ENCODE measurements at regions of chr20 and their contacts with region 1.

Region 1: DNA sequence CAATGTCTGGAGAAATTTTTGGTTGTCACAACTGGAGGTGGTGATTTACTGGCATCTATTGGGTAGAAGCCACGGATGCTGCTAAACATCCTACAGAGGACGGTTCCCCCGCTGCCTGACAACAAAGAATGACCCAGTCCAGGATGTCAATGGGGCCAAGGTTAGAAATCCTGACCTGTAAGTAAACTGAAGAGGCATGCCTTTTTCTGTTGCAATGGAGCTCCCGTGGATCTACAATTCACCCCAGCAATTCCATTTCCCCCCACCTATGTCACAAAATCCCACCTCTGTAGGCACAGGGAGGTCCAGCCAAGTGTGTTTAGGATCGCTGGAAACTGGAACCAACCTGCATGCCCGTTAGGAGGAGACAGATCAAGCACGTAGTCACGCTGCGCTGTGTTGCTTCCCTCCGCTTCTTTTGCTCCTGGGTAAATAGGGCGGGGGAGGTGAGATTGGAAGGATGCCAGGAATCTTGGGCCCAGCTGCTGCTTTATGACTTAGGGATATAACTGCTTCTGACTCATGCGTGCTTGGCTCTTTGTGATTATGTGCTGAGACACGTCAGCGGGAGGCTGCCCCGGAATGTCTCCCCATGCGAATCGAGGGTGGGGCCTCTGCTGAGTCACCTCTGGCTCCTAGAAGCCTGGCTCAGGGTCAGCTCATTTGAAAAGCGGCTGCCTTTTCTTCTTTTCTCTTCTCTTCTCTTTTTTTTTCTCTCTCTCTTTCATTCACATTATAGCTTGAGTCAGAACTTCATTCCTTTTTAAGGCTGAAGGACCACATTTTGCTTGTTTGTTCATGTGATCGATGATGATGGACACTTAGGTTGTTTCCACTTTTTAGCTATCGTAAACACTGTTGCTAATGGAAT is 12.4 kb upstream of the PEDS1 start:
- DNase-seq: peak; percentile 28 to 90 (median 34)
- H3K4me3 ChIP-seq: no peak overlapping the region
- H3K4me3 Mint-ChIP-seq: peak overlapping the region; percentile 35 to 72 (median 64)
- H3K27ac ChIP-seq: no peak overlapping the region
- H3K27ac Mint-ChIP-seq: peak overlapping the region in 5 of 7 donors; percentile 41 to 82 (median 70)
- H3K4me1 ChIP-seq: peaks cover 9% of the 10 kb centered on the region
- H3K4me1 Mint-ChIP-seq: peaks cover 6 to 13% (median 10%) of the 10 kb centered on the region in 4 donors
- H3K27me3 ChIP-seq: no peaks in the 10 kb centered on the region
- H3K27me3 Mint-ChIP-seq: peaks cover 2 to 4% of the 10 kb centered on the region in 2 donors

Region 2: DNA sequence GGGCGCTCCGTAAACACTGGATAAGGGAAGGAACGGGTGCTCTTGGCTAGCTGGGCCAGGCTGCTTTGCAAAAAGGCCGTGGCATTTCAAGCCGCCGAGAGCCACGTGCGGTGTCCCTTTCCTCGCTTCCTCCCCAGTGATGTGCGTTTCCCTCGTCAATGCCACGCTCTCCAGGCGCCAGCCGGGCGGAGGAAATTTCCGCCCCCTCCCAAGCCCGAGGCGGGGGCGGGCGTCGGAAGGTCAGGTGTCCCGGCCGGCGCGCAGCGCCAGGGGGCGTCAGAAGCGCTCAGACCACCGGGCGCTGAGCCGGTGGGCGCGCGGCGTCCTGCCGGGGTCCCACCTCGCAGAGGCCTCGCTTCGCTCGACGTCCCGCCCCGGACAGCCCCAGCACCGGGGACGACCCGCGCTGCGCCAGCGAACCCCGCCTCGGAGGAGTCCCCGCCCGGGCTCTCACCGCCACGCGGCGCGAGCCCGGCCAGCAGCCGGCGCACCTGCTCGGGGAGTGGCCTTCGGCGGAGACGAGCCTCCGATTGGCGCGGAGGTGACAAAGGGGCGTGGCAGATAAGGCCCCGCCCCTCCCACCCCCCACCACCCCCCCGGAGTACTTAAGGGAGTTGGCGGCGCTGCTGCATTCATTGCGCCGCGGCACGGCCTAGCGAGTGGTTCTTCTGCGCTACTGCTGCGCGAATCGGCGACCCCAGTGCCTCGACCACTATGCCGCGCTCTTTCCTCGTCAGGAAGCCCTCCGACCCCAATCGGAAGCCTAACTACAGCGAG is 183.4 kb before region 1 on chr20 and contains the start of gene SNAI1:
- CTCF ChIA-PET with region 1: interaction called, 27 read pairs
- POLR2A ChIA-PET with region 1: interaction called, 5 read pairs
- intact Hi-C with region 1: loop called (anchors 1 kb)
- DNase-seq: peak; percentile 81 to 87 (median 83)
- H3K4me3 ChIP-seq: peak within 1 kb of the TSS in 1 of 2 donors; percentile 23
- H3K4me3 Mint-ChIP-seq: peak within 1 kb of the TSS; percentile 57 to 76 (median 68)
- H3K27ac ChIP-seq: no peak within 1 kb of the TSS
- H3K27ac Mint-ChIP-seq: peak within 1 kb of the TSS; percentile 36 to 84 (median 74)
- H3K4me1 ChIP-seq: peaks cover 20% of the 10 kb centered on the region
- H3K4me1 Mint-ChIP-seq: peaks cover 9 to 33% (median 16%) of the 10 kb centered on the region in 4 donors
- H3K27me3 ChIP-seq: no peaks in the 10 kb centered on the region
- H3K27me3 Mint-ChIP-seq: no peaks in the 10 kb centered on the region
- total RNA-seq, gene SNAI1: 0.19 to 0.44 TPM

Region 3: DNA sequence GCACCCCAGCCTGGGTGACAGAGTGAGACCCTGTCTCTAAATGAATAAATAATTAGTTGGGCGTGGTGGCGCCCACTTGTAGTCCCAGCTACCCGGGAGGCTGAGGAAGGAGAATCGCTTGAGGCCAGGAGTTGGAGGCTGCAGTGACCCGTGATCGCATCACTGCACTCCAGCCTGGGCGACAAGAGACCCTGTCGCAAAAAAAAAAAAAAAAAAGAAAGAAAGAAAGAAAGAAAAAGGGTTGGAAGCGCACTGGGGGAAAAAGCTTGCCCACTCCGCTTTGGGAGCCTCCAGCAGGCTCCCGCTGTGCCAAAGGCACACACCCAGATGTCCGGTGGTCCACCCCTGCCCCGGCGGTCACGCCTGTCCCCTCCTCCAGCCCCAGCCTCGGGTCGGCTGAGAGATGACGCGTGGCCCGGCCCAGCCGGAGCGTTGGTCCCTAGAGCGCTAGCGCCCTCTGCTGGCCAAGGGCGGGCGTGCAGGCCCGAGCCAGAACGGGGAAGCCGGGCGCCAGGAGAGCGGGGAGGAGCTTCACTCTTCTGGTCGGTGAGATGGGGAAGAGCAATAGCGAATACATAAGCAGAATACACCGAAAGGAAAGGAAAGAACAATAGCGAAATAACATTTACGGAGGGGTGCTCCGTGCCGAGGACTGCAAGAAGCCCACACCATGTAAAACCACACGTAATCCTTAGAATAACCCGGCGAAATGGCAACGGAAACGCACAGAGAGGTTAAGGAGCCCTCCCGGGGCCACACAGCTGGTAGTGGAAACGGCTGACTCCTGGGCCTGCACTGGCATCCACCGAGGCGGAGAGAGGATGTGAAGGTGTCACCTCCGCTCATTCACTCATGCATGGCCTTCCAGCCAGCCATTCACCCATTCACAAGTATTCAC is 94.7 kb before region 1 on chr20:
- CTCF ChIA-PET with region 1: interaction called, 11 read pairs
- POLR2A ChIA-PET with region 1: no interaction called
- intact Hi-C with region 1: loop called (anchors 5 kb)
- DNase-seq: peak; percentile 79 to 90 (median 83)
- H3K4me3 ChIP-seq: peak overlapping the region; percentile 0 to 34
- H3K4me3 Mint-ChIP-seq: peak overlapping the region; percentile 71 to 79 (median 74)
- H3K27ac ChIP-seq: no peak overlapping the region
- H3K27ac Mint-ChIP-seq: peak overlapping the region in 3 of 7 donors; percentile 40 to 84 (median 81)
- H3K4me1 ChIP-seq: peaks cover 6% of the 10 kb centered on the region
- H3K4me1 Mint-ChIP-seq: peaks cover 3 to 6% (median 5%) of the 10 kb centered on the region in 4 donors
- H3K27me3 ChIP-seq: no peaks in the 10 kb centered on the region
- H3K27me3 Mint-ChIP-seq: peaks cover 0 to 2% of the 10 kb centered on the region in 2 donors

Region 4: DNA sequence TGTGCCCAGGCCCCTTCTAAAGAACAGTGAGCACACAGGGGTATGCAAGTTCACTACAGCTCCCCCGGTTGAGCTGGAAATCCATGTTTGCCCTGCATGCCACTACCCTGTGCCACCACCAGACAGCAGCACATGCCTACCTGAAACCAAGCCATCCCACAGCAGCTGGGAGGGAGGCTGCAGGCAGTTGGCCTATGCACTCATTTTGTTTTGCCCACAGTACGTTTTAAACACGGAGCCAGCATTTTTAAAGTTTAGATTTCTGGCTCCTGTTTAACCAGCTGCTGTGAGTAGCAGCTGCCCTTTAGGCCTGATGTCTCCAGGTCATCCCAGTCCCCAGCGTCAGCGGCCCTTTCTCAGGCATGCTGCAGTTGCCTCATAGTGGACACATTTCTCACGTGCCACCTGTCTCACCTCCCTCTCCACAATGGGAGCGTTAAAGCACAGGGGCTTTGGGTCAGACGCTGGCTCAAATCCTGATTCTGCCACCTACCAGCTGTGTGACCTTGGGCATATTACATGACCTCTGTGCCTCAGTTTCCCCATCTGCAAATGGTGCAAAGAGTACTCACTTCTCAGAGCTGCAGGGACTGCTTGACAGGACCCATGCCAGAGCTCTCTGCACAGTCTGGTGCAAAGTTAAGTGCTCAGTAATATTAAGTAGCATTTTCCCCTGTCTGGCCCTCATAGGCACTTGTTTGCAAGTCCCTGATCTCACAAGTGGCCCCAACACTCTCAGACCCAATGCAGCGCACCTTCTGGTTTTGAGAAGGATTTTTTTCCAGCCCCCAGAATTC is 44.8 kb before region 1 on chr20:
- CTCF ChIA-PET with region 1: interaction called, 338 read pairs
- POLR2A ChIA-PET with region 1: interaction called, 25 read pairs
- intact Hi-C with region 1: loop called (anchors 1 kb)
- DNase-seq: peak; percentile 59 to 69 (median 67)
- H3K4me3 ChIP-seq: no peak overlapping the region
- H3K4me3 Mint-ChIP-seq: no peak overlapping the region
- H3K27ac ChIP-seq: no peak overlapping the region
- H3K27ac Mint-ChIP-seq: peak overlapping the region in 1 of 7 donors; percentile 68
- H3K4me1 ChIP-seq: peaks cover 4% of the 10 kb centered on the region
- H3K4me1 Mint-ChIP-seq: peaks cover under 1 to 8% (median 7%) of the 10 kb centered on the region in 4 donors
- H3K27me3 ChIP-seq: no peaks in the 10 kb centered on the region
- H3K27me3 Mint-ChIP-seq: no peaks in the 10 kb centered on the region

Region 5: DNA sequence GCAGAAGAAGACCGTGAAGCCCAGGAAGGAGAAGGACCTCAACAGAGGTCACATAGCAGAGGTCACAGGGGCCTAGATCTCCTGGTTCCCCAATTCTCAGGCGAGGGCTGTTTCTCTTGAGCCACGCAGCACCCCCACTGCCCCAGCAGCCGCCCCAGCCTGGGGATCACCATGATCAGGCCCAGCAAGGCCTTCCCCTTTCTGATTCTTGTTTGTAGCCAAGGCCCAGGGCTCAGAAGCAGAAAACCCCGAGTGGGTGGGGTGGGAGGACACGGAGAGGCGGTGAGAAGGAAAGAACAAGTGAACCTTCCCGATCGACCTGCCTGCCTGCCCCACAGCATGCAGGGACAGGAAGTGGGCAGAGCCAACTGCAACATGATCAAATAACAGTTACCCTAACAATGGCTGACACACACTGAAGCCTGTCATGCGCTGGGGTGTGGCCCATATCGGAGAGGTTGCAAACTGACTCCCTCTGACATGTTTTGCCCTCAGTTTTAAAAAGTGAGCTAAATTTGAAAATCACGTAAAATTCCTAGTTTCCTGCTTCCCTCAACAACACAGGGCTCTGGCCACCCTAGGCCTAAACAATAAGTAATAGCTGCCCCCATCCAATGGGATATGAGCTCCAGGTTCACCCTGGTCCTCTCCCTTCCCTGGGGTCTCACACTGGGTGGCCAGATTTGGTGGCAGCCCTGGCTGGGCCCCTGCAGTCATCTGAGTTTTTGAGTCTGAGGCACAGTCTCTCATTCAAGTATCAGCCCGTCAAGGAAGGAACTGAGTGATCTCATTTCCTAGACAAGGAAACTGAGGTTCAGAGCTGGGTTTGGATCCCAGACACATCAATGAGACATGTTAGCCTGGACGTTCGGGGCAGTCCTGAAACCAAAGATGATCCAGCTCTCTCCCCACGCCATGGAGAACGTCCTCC is 18.9 kb before region 1 on chr20:
- CTCF ChIA-PET with region 1: interaction called, 69 read pairs
- POLR2A ChIA-PET with region 1: interaction called, 5 read pairs
- intact Hi-C with region 1: no loop called
- DNase-seq: peak; percentile 78 to 94 (median 84)
- H3K4me3 ChIP-seq: peak overlapping the region; percentile 4 to 49
- H3K4me3 Mint-ChIP-seq: peak overlapping the region; percentile 78 to 93 (median 84)
- H3K27ac ChIP-seq: peak overlapping the region; percentile 78
- H3K27ac Mint-ChIP-seq: peak overlapping the region; percentile 97 to 99 (median 98)
- H3K4me1 ChIP-seq: peaks cover 65% of the 10 kb centered on the region
- H3K4me1 Mint-ChIP-seq: peaks cover 48 to 70% (median 60%) of the 10 kb centered on the region in 4 donors
- H3K27me3 ChIP-seq: no peaks in the 10 kb centered on the region
- H3K27me3 Mint-ChIP-seq: no peaks in the 10 kb centered on the region

Region 6: DNA sequence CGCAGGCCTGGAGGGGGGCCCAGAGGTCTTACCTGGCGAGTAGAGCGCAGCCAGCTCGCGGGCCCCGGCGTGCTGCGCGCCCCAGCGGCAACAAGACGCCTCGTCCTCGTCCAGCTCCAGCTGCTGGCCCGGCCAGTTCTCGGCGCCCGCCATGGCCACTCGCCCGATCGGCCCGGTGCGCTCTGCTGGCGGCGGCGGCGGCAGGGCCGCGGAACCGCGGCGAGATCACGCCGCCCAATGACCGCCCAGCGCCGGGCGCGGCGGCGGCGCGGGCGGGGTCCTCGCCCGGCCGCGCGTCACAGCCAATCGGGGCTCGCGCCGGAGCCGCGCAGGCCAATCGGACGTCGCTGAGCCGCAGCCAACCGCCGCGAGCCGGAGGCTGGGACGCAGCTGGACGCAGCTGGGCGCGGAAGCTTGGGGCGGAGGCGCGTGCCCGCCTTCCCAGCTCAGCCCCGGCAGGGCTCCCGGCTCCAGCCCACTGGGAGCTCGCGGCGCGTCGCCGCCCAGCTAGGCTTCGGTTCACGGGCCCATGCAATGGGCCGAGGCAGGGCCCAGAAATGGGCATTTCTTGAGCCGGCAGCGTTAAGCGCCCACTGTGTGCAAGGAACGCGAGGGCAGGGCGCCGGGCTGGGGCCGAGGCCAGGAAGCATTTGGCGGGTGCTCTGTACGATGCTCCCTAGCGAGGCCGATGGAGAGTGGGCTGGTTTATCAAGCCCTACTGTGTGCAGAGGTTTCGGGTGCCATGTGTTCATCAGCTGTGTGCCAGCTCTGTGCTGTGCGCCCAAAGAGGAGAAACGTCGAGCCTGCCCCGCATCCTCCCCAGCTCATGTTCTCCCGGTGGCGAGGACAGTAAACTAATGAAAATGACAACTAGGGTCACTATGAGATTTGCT is 12.2 kb before region 1 on chr20 and contains the start of gene PEDS1:
- CTCF ChIA-PET with region 1: interaction called, 69 read pairs
- POLR2A ChIA-PET with region 1: interaction called, 15 read pairs
- intact Hi-C with region 1: loop called (anchors 1 kb)
- DNase-seq: peak; percentile 77 to 86 (median 82)
- H3K4me3 ChIP-seq: peak within 1 kb of the TSS; percentile 83 to 87
- H3K4me3 Mint-ChIP-seq: peak within 1 kb of the TSS; percentile 87 to 94 (median 90)
- H3K27ac ChIP-seq: peak within 1 kb of the TSS; percentile 81
- H3K27ac Mint-ChIP-seq: peak within 1 kb of the TSS; percentile 93 to 96 (median 95)
- H3K4me1 ChIP-seq: peaks cover 50% of the 10 kb centered on the region
- H3K4me1 Mint-ChIP-seq: peaks cover 33 to 53% (median 42%) of the 10 kb centered on the region in 4 donors
- H3K27me3 ChIP-seq: no peaks in the 10 kb centered on the region
- H3K27me3 Mint-ChIP-seq: no peaks in the 10 kb centered on the region
- total RNA-seq, gene PEDS1: 16.8 TPM

Region 7: GRCh38 chr20:50179507-50180016 is 13.6 kb after region 1 on chr20:
- CTCF ChIA-PET with region 1: interaction called, 50 read pairs
- POLR2A ChIA-PET with region 1: no interaction called
- intact Hi-C with region 1: loop called (anchors 1 kb)
- DNase-seq: peak in 1 of 5 donors; percentile 4
- H3K4me3 ChIP-seq: no peak overlapping the region
- H3K4me3 Mint-ChIP-seq: no peak overlapping the region
- H3K27ac ChIP-seq: no peak overlapping the region
- H3K27ac Mint-ChIP-seq: peak overlapping the region in 1 of 7 donors; percentile 53
- H3K4me1 ChIP-seq: no peaks in the 10 kb centered on the region
- H3K4me1 Mint-ChIP-seq: peaks cover 0 to 7% (median 0%) of the 10 kb centered on the region in 4 donors
- H3K27me3 ChIP-seq: no peaks in the 10 kb centered on the region
- H3K27me3 Mint-ChIP-seq: peaks cover 2 to 4% of the 10 kb centered on the region in 2 donors

Region 8: DNA sequence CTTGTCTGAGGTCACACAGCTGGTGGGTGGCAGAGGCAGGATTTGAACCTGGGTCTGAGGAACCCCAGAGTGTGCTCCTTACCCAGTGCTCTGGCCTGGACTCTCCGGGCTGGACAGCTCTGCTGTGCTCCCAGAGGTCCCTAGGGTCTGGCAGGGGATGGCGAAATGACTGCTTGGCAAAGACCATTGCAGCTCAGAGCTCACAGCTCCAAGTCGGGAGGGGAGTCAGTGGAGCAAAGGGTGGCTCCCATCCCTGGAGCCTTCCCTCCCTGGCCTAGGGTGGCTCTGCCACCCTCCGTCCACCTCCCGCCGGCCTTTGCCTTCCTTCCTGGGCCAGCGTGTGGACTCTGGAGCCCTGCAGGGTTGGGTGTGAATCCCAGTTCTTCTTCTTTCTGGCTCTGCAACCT is 42.2 kb after region 1 on chr20:
- CTCF ChIA-PET with region 1: no interaction called
- POLR2A ChIA-PET with region 1: no interaction called
- intact Hi-C with region 1: no loop called
- DNase-seq: no peak
- H3K4me3 ChIP-seq: no peak overlapping the region
- H3K4me3 Mint-ChIP-seq: no peak overlapping the region
- H3K27ac ChIP-seq: no peak overlapping the region
- H3K27ac Mint-ChIP-seq: no peak overlapping the region
- H3K4me1 ChIP-seq: peaks cover 3% of the 10 kb centered on the region
- H3K4me1 Mint-ChIP-seq: peaks cover 7 to 17% (median 12%) of the 10 kb centered on the region in 4 donors
- H3K27me3 ChIP-seq: no peaks in the 10 kb centered on the region
- H3K27me3 Mint-ChIP-seq: peaks cover 1 to 3% of the 10 kb centered on the region in 2 donors